Endothelial cell of umbilical vein (primary cell): ENCODE measurements at regions of chr5 and their contacts with region 1.

Region 1: GRCh38 chr5:10424124-10424731 is 17.5 kb upstream of the ROPN1L start:
- DNase-seq: peak; percentile 42
- H3K4me3 ChIP-seq: no peak overlapping the region
- H3K27ac ChIP-seq: no peak overlapping the region
- H3K4me1 ChIP-seq: peaks cover 29% of the 10 kb centered on the region
- H3K27me3 ChIP-seq: no peaks in the 10 kb centered on the region
- CTCF ChIP-seq: peak; percentile 40 to 68
- POLR2A ChIP-seq: no peak

Region 2: GRCh38 chr5:10099548-10099947 is 324.7 kb before region 1 on chr5:
- CTCF ChIA-PET with region 1: no interaction called
- POLR2A ChIA-PET with region 1: no interaction called
- dilution Hi-C with region 1: no loop called
- intact Hi-C with region 1: no loop called
- DNase-seq: no peak
- H3K4me3 ChIP-seq: no peak overlapping the region
- H3K27ac ChIP-seq: no peak overlapping the region
- H3K4me1 ChIP-seq: no peaks in the 10 kb centered on the region
- H3K27me3 ChIP-seq: no peaks in the 10 kb centered on the region
- CTCF ChIP-seq: no peak
- POLR2A ChIP-seq: no peak

Region 3: DNA sequence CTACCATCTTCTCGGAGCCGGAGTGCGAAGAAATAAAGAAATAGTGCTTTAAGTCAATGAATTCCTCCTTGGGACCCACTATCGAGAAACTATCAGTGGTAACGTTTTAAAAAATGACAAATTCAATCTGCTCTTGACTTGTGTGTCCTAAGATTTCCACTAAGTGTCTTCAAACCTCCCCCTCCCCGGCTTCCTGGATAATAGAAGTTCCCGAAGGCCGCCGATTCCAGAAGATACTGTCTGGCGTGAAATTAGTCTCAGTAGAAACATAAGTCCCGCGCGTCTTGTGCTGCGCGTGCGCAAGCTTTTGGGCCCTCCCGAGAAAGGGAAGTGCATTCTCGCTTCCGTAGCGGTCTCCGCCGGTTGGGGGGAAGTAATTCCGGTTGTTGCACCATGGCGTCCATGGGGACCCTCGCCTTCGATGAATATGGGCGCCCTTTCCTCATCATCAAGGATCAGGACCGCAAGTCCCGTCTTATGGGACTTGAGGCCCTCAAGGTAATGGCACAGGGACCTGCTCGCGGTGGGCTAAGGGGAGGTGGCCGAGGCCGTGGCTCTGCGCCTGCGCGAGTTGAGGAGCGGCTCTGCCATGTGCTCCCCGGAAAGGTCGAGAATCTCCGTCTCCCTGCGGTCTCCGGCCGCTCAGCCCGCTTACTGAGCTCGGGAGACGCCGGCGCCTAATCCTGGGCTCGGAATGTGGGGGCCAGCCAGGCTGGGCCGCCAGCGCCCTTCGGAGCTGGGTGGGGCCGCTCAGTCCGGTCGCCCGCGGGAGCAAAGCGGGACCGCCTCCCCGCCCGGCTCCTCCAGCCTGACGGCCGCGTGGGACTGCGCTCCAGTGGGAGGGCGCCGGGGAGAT is 174.1 kb before region 1 on chr5 and contains the start of gene CCT5:
- CTCF ChIA-PET with region 1: no interaction called
- POLR2A ChIA-PET with region 1: no interaction called
- dilution Hi-C with region 1: loop called (anchors 25 kb)
- intact Hi-C with region 1: no loop called
- DNase-seq: peak; percentile 97
- H3K4me3 ChIP-seq: peak within 1 kb of the TSS; percentile 84 to 95 (median 93)
- H3K27ac ChIP-seq: peak within 1 kb of the TSS; percentile 95
- H3K4me1 ChIP-seq: peaks cover 14% of the 10 kb centered on the region
- H3K27me3 ChIP-seq: no peaks in the 10 kb centered on the region
- CTCF ChIP-seq: no peak
- POLR2A ChIP-seq: peak; percentile 77
- total RNA-seq, gene CCT5: 323 and 343 TPM in 2 replicates

Region 4: DNA sequence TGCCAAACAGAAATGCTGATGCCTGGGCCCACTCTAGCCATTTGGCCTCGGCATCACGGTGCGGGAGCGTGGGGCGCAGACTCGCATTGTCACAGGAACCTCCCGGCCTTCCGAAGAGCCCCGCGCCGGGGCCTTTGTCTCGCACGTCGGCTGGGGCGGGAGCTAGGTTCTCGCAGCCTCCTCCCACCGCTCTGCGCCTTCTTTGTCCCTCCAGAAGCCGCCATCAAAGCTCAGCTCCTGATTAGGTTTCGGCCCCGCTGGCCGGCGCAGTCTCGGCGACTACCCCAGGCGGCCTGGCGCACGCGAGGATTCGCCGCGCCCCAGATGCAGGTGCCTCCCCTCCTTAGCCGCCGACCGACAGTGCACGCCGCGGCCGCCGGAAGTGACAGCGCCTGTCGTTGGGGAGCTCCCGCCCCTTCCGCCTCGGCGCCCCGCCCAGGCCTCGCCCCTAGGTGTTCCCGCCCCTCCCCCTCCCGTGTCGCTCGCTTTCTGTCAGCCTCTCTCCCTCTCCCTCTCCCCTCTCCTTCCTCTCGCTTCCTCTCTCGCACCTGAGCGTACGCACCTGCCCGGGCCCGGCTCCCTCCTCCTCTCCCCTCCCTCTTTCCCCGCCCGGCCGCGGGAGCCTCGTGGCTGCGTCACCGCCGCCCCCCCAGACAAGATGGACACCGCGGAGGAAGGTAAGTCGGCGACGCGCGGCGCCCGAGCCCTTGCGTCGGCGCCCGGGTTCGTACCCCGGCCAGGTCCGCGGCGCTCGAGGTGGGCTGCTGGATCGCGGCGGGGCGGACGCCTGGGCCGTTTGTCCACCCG is 70.8 kb before region 1 on chr5 and contains the start of gene MARCHF6:
- CTCF ChIA-PET with region 1: interaction called, 7 read pairs
- POLR2A ChIA-PET with region 1: interaction called, 3 read pairs
- dilution Hi-C with region 1: no loop called
- intact Hi-C with region 1: loop called (anchors 2 kb)
- DNase-seq: peak; percentile 89
- H3K4me3 ChIP-seq: peak within 1 kb of the TSS; percentile 47 to 94 (median 72)
- H3K27ac ChIP-seq: peak within 1 kb of the TSS; percentile 85
- H3K4me1 ChIP-seq: peaks cover 17% of the 10 kb centered on the region
- H3K27me3 ChIP-seq: no peaks in the 10 kb centered on the region
- CTCF ChIP-seq: no peak
- POLR2A ChIP-seq: peak; percentile 97
- total RNA-seq, gene MARCHF6: 105 and 108 TPM in 2 replicates

Region 5: DNA sequence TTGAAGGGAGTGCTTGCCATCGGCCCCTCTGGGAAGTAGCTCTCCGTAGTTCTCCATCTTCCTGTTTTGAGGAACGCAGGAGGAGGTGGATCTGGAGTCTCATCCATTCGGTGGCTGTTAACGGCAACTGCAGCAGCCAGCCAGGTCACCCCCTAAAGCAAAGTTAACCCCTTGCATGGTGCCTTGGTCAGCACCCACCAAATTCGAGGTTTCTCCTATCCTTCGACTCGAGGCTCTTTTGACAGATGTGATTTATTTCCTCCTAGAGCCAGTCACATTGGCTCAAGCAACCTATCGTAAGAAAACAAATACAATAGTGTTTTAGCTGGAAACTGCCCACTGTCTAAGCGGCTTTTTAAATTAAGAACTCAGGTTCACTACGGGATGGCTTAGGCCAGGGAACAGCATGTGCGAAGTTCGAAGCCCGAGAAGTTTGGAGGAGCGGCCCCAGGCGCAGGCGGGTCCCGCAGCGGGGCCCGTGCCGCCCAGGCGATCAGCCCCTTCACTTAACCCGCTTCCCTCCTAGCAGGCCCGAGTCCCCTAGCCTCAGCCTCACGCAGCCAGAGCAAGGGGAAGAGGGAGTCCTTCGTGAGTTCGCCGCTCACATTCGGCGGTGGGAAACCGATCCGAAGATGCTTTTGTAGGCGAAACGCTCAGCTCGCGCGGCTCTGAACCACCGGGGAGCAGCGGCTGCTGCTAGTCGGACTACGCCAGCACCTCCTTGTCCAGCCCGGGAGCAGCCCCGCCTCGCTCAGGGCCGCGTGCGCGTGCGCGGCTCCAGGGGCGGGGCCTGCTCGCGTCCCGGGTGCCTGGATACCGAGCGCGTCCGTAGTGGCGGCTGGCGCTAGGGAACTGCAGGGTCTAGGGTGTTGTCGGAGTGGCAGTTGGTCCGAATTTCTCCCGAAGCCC is 17.1 kb after region 1 on chr5 and contains the start of gene ROPN1L:
- CTCF ChIA-PET with region 1: interaction called, 6 read pairs
- POLR2A ChIA-PET with region 1: no interaction called
- dilution Hi-C with region 1: no loop called
- intact Hi-C with region 1: loop called (anchors 2 kb)
- DNase-seq: peak; percentile 90
- H3K4me3 ChIP-seq: peak within 1 kb of the TSS; percentile 56 to 73 (median 57)
- H3K27ac ChIP-seq: peak within 1 kb of the TSS; percentile 21
- H3K4me1 ChIP-seq: peaks cover 23% of the 10 kb centered on the region
- H3K27me3 ChIP-seq: no peaks in the 10 kb centered on the region
- CTCF ChIP-seq: no peak
- POLR2A ChIP-seq: peak; percentile 77
- total RNA-seq, gene ROPN1L: 0.55 and 0.60 TPM in 2 replicates